ENCODE measurements at regions of chr1 and their contacts with region 1.

Region 1: DNA sequence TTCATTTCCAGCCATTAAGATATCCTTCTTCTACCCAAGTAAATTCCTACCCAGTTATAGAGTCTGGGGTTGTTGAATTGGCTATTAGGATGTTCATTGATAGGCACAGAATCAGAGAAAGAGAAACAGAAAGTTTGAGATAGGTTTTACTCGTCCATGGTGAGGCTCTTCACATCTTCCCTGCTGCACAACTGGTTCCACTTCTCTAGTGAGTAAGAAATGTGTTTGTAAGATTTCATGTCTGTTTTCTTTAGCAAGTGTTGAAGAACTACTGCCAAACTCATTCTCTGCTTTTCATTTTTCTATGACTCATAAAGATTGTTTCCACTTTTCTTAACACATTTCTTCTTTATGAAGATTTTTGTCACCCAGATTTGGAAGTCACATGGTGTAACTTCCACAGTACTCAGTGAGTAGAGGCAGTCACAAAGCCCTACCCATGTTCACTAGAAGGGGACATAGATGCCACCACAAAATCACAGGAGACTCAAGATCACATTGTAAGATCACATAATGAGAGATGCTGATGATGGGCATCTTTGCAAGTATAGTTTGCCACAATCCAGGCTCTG is 152.3 kb downstream of the SNX7 start:
- DNase-seq: peak; percentile 18
- ATAC-seq: peak; percentile 94
- H3K4me3 Mint-ChIP-seq: no peak overlapping the region
- H3K27ac Mint-ChIP-seq: peak overlapping the region; percentile 39
- H3K4me1 Mint-ChIP-seq: peaks cover 12% of the 10 kb centered on the region
- H3K27me3 Mint-ChIP-seq: no peaks in the 10 kb centered on the region

Region 2: DNA sequence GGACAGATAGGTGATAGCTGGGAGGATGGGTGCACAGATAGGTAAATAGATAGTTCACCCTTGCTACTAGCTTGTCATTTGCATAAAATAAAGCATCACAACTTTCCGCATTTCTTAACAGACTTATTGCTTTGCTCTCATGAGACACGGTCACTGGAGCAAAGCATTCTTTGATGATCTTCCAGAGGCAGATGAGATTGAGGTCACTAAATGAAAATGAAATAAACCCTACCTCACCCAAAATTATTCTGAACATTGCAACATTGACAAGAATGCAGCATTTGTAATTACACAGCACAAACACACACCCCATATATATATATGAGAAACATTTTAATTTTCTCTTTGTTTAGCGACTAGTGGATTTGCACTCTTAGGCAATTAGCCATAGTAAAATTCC is 44.7 kb before region 1 on chr1:
- CTCF ChIA-PET with region 1: no interaction called
- POLR2A ChIA-PET with region 1: no interaction called
- intact Hi-C with region 1: no loop called
- DNase-seq: no peak
- ATAC-seq: no peak
- H3K4me3 Mint-ChIP-seq: no peak overlapping the region
- H3K27ac Mint-ChIP-seq: no peak overlapping the region
- H3K4me1 Mint-ChIP-seq: no peaks in the 10 kb centered on the region
- H3K27me3 Mint-ChIP-seq: no peaks in the 10 kb centered on the region

Region 3: GRCh38 chr1:98870959-98871903 is 57.4 kb after region 1 on chr1:
- CTCF ChIA-PET with region 1: no interaction called
- POLR2A ChIA-PET with region 1: no interaction called
- intact Hi-C with region 1: loop called in 1 of 2 experiments (anchors 1 kb)
- DNase-seq: peak; percentile 41
- ATAC-seq: peak; percentile 95
- H3K4me3 Mint-ChIP-seq: peak overlapping the region; percentile 60
- H3K27ac Mint-ChIP-seq: peak overlapping the region; percentile 94
- H3K4me1 Mint-ChIP-seq: peaks cover 21% of the 10 kb centered on the region
- H3K27me3 Mint-ChIP-seq: no peaks in the 10 kb centered on the region

Region 4: GRCh38 chr1:99119188-99119587 is 305.4 kb after region 1 on chr1:
- CTCF ChIA-PET with region 1: no interaction called
- POLR2A ChIA-PET with region 1: no interaction called
- intact Hi-C with region 1: loop called in 1 of 2 experiments (anchors 10 kb)
- DNase-seq: no peak
- ATAC-seq: no peak
- H3K4me3 Mint-ChIP-seq: no peak overlapping the region
- H3K27ac Mint-ChIP-seq: no peak overlapping the region
- H3K4me1 Mint-ChIP-seq: no peaks in the 10 kb centered on the region
- H3K27me3 Mint-ChIP-seq: peaks cover 2% of the 10 kb centered on the region

Measured in activated CD4-positive, alpha-beta T cell treated with anti-CD3 and anti-CD28 coated beads for 36 hours (primary cell).